AG04449 (cell line): ENCODE measurements at regions of chr10 and their contacts with region 1.

Region 1: GRCh38 chr10:110547139-110547761 is 20.2 kb upstream of the SMC3 start:
- DNase-seq: no peak
- H3K4me3 ChIP-seq: no peak overlapping the region
- CTCF ChIP-seq: peak; percentile 53

Region 2: DNA sequence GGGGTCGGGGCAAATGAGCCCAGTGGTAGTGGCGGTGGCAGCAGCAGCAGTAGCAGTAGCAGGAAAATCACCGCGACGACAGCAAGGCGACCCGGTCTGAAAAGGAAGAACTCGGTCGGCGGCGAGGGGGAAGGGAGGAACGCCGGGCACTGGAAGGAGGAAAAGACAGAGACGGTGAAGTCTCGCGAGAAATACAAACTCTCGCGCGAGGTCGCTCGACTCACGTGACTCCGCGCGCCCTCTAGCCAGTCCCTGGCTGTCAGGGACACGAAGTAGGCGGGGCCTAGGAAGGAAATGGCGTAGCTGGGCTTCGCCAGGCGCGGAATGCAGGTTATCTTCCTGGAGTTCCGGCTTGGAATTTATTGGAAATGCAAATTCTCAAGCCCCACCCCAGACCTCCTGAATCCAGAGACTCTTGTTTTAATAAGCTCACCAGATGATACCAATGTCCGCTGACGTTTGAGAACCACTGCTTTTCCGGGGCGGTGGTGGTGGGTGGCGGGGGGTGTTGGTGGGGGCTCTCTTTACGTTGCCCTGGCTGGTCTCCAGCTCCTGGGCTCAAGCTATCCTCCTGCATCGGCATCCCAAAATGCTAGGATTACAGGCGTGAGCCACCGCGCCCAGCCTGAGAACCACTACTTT is 242.3 kb before region 1 on chr10 and contains the start of gene SMNDC1:
- CTCF ChIA-PET with region 1: interaction called, 144 read pairs
- POLR2A ChIA-PET with region 1: no interaction called
- DNase-seq: peak; percentile 84
- H3K4me3 ChIP-seq: peak within 1 kb of the TSS; percentile 80
- CTCF ChIP-seq: no peak

Region 3: DNA sequence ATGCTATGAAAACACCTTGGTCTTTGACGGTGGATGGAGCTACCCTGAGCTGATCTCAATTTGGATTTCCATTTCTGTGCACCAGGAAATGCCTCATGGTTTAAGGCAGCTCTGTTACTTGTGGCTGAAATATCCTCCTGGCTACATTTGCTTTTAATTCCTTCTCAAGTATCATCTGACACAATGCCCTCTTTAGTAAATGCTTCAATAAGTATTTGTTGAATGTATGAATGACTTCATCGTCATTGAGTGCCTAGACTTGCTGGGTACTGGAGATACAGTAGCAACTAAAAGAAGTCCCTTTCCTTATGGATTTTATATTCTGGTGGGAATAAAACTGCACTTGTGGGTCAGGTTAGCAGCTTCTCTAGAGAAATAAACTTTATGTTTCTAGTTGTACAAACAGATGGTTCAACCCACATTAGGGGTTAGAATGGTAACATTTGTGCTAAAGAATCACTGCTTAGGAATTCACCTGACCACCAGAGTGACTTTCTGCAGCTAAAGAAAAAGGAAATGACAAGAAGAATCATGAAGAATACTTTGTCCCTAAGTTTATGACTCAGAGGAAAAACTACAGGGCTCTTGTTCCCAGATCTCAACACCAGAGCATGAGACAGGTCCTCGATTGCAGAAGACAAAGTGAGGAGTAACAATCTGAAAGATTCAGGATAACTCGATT is 220.8 kb before region 1 on chr10:
- CTCF ChIA-PET with region 1: interaction called, 26 read pairs
- POLR2A ChIA-PET with region 1: no interaction called
- DNase-seq: peak; percentile 64
- H3K4me3 ChIP-seq: no peak overlapping the region
- CTCF ChIP-seq: no peak

Region 4: GRCh38 chr10:110414563-110415309 is 132.5 kb before region 1 on chr10:
- CTCF ChIA-PET with region 1: interaction called, 12 read pairs
- POLR2A ChIA-PET with region 1: no interaction called
- DNase-seq: no peak
- H3K4me3 ChIP-seq: no peak overlapping the region
- CTCF ChIP-seq: no peak

Region 5: DNA sequence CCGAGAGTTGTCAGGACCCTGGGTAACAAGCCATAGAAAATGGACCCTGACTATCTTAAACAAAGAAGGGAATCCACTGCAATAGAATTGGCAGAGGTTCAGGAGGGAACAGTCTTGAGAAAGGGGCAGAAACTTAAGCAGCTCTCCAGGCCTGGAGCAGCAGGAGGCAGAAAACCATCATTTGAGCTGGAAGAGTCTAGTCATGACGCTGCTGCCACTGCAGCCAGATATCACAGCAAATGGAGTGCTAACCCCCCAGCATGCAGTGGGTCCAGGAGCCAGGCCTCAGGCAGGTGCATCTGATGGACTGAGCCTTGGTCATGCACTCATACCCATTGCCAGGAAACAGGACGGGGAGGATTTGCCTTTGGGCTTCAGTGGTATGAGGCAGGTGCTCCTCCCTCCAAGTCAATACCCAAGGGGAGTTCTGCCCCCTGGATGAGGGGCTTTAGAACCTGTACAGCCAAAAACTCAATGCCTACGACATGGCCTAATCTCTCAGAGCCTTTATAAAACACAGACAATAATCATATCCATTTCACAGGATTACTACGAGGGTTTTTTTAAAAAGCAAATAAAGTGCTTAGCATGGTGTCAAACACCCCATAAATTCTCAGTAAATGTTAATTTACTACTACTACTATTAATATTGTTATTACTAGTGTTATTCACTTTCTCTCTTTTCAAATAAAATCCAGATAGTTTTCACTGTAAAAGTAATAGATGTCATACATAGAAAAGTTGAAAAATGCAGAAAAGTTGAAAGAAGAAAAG is 18.8 kb before region 1 on chr10:
- CTCF ChIA-PET with region 1: interaction called, 71 read pairs
- POLR2A ChIA-PET with region 1: no interaction called
- DNase-seq: no peak
- H3K4me3 ChIP-seq: no peak overlapping the region
- CTCF ChIP-seq: no peak

Region 6: GRCh38 chr10:110567201-110568054 is 20.2 kb after region 1 on chr10 and contains the start of gene SMC3:
- CTCF ChIA-PET with region 1: interaction called, 84 read pairs
- POLR2A ChIA-PET with region 1: no interaction called
- DNase-seq: peak; percentile 75
- H3K4me3 ChIP-seq: peak within 1 kb of the TSS; percentile 84
- CTCF ChIP-seq: no peak